Activated CD8-positive, alpha-beta T cell treated with anti-CD3 and anti-CD28 coated beads, Interleukin-2, amount 10 ng/mL, durations not matched to agents 7 days and 5 days (primary cell): ENCODE measurements at regions of chr10 and their contacts with region 1.

Region 1: GRCh38 chr10:67666416-67667034 is 29.5 kb downstream of the CTNNA3 start:
- DNase-seq: no peak
- ATAC-seq: no peak
- H3K4me3 Mint-ChIP-seq: no peak overlapping the region
- H3K27ac Mint-ChIP-seq: no peak overlapping the region
- H3K4me1 Mint-ChIP-seq: no peaks in the 10 kb centered on the region
- H3K27me3 Mint-ChIP-seq: peaks cover 3% of the 10 kb centered on the region

Region 2: GRCh38 chr10:67650558-67650957 is 16.0 kb before region 1 on chr10:
- CTCF ChIA-PET with region 1: no interaction called
- POLR2A ChIA-PET with region 1: no interaction called
- DNase-seq: no peak
- ATAC-seq: no peak
- H3K4me3 Mint-ChIP-seq: no peak overlapping the region
- H3K27ac Mint-ChIP-seq: no peak overlapping the region
- H3K4me1 Mint-ChIP-seq: no peaks in the 10 kb centered on the region
- H3K27me3 Mint-ChIP-seq: peaks cover 5% of the 10 kb centered on the region

Region 3: DNA sequence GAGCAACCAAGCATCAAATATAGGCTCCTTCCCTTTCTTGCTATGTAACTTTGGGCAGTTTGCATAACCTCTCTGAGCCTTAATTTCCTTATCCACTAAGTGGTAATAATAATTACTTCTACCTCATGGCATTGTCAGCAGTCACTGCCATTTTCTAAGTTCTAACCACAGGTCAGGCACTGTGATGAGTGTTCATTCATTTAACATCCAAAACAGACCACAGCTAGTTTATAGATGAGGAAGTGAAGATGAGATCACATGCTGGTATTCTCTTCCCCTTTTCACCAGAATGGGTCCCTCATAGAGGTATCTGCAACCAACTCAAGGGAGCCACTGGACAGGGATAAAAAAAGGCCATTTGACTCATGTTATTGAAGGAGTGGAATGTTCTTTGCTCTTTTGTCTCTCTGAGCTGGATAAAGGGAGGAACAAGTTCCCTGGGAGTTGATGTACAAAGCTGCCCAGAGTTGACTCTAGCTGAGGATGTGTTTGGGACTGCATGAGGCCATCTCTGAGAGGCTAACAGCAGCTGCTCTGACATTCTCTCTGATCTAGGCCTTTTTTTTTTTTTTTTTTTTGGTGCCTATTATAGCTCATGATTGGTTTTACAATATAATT is 106.5 kb after region 1 on chr10:
- CTCF ChIA-PET with region 1: interaction called, 107 read pairs
- POLR2A ChIA-PET with region 1: no interaction called
- DNase-seq: no peak
- ATAC-seq: peak; percentile 61
- H3K4me3 Mint-ChIP-seq: no peak overlapping the region
- H3K27ac Mint-ChIP-seq: peak overlapping the region; percentile 46
- H3K4me1 Mint-ChIP-seq: peaks cover 54% of the 10 kb centered on the region
- H3K27me3 Mint-ChIP-seq: no peaks in the 10 kb centered on the region